MCF 10A (cell line): ENCODE measurements at regions of chr2 and their contacts with region 1.

Region 1: GRCh38 chr2:31151501-31151900 is 13.3 kb upstream of the GALNT14 start:
- DNase-seq: no peak
- H3K4me3 Mint-ChIP-seq: no peak overlapping the region
- H3K27ac Mint-ChIP-seq: no peak overlapping the region
- H3K4me1 Mint-ChIP-seq: no peaks in the 10 kb centered on the region
- H3K27me3 Mint-ChIP-seq: peaks cover 33% of the 10 kb centered on the region
- CTCF ChIP-seq: no peak

Region 2: DNA sequence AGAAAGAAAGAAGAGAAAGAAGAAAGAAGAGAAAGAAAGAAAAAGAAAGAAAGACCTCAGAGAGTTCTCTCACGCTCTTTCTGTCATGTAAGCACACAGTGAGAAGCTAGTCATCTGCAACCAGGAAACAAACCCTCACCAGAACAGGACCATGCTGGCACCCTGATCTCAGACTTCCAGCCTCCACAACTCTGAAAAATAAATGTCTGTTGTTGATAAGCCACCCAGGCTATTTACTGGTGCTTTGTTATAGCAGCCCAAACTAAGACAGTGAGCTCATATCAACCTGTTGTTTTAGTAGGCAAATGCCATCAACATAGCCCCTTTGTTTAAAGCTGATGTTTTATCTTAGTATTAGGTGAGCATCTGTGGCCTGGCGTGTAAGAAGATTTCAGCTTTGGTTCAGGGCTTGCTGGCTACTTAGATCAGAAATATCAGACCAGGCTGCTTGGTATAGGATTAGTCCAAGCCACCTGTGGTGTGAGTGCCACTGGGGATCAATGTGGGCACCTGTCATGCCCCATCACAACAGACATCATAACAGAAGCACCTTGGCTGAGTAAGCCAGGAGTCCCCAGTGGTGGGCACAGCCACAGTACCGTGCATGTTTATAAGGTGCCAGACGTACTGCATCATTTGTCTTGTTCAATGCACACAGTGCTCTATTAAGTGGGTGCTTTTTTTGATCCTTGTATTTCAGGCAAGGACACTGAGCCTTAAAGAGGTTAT is 825.7 kb before region 1 on chr2:
- CTCF ChIA-PET with region 1: no interaction called
- POLR2A ChIA-PET with region 1: no interaction called
- intact Hi-C with region 1: no loop called
- DNase-seq: no peak
- H3K4me3 Mint-ChIP-seq: no peak overlapping the region
- H3K27ac Mint-ChIP-seq: no peak overlapping the region
- H3K4me1 Mint-ChIP-seq: no peaks in the 10 kb centered on the region
- H3K27me3 Mint-ChIP-seq: no peaks in the 10 kb centered on the region
- CTCF ChIP-seq: no peak

Region 3: GRCh38 chr2:31031132-31031706 is 120.3 kb before region 1 on chr2:
- CTCF ChIA-PET with region 1: no interaction called
- POLR2A ChIA-PET with region 1: no interaction called
- intact Hi-C with region 1: no loop called
- DNase-seq: no peak
- H3K4me3 Mint-ChIP-seq: no peak overlapping the region
- H3K27ac Mint-ChIP-seq: no peak overlapping the region
- H3K4me1 Mint-ChIP-seq: no peaks in the 10 kb centered on the region
- H3K27me3 Mint-ChIP-seq: no peaks in the 10 kb centered on the region
- CTCF ChIP-seq: no peak

Region 4: GRCh38 chr2:31170071-31170698 is 18.7 kb after region 1 on chr2:
- CTCF ChIA-PET with region 1: interaction called, 18 read pairs
- POLR2A ChIA-PET with region 1: interaction called, 3 read pairs
- intact Hi-C with region 1: no loop called
- DNase-seq: peak; percentile 71
- H3K4me3 Mint-ChIP-seq: no peak overlapping the region
- H3K27ac Mint-ChIP-seq: no peak overlapping the region
- H3K4me1 Mint-ChIP-seq: no peaks in the 10 kb centered on the region
- H3K27me3 Mint-ChIP-seq: peaks cover 18% of the 10 kb centered on the region
- CTCF ChIP-seq: peak; percentile 96